ENCODE measurements at regions of chr3 and their contacts with region 1.

Region 1: DNA sequence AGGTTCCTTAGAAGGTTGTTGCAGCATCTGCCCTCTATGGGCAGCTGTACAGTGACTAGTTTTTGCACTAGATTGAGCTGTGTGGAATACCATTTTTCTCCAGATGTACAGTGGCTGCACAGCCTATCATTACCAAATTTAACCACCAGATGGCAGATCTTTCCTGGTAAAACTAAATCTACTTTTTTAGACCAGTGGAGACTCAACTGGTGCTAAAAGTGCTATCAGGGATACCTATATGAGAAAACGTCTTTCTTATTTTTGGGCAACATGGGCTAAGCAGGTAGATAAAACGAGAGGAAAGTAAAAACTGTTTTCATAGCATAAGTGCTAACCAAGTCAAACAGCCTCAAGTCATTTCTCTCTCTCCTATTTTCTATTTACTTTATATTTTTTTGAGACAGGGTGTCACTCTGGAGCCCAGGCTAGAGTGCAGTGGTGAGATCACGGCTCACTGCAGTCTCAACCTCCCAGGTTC is 21.2 kb downstream of the IGSF10 start:
- DNase-seq: peak in 3 of 5 donors; percentile 23 to 84 (median 79)
- H3K4me3 ChIP-seq: no peak overlapping the region
- H3K27ac ChIP-seq: no peak overlapping the region
- H3K4me1 ChIP-seq: no peaks in the 10 kb centered on the region
- H3K27me3 ChIP-seq: no peaks in the 10 kb centered on the region
- CTCF ChIP-seq: peak; percentile 79

Region 2: DNA sequence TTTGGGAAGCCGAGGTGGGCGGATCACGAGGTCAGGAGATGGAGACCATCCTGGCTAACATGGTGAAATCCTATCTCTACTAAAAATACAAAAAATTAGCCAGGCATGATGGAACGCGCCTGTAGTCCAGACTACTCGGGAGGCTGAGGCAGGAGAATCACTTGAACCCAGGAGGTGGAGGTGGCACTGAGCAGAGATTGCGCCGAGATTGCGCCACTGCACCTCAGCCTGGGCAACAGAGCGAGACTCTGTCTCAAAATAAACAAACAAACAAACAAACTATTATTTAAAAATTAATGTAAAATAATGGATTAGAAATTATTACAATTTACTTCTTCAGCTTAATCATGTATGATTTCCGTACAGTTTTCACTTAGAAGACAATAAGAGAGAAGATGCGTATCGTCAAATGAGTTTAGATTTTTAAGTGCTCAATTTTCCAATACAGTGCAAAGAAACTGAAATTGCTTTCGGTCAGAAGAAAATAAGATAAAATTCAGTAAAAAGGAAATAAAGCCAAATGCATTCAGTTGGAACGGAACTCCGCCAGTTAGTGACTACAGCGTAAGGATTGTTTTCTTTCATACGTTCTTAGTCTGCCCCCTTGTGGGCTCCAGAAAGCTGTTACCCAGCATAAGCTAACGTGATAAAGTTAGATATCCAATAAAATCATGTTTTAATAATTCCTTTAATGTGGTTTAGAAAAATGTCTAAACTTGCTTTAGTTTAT is 399.1 kb after region 1 on chr3:
- intact Hi-C with region 1: loop called (anchors 10 kb)
- DNase-seq: peak in 4 of 5 donors; percentile 37 to 93 (median 62)
- H3K4me3 ChIP-seq: peak overlapping the region; percentile 34 to 68 (median 57)
- H3K27ac ChIP-seq: no peak overlapping the region
- H3K4me1 ChIP-seq: peaks cover 0 to 2% (median 0%) of the 10 kb centered on the region in 3 donors
- H3K27me3 ChIP-seq: no peaks in the 10 kb centered on the region
- CTCF ChIP-seq: peak; percentile 85